HCT116 (cell line): ENCODE measurements at regions of chr1 and their contacts with region 1.

Region 1: DNA sequence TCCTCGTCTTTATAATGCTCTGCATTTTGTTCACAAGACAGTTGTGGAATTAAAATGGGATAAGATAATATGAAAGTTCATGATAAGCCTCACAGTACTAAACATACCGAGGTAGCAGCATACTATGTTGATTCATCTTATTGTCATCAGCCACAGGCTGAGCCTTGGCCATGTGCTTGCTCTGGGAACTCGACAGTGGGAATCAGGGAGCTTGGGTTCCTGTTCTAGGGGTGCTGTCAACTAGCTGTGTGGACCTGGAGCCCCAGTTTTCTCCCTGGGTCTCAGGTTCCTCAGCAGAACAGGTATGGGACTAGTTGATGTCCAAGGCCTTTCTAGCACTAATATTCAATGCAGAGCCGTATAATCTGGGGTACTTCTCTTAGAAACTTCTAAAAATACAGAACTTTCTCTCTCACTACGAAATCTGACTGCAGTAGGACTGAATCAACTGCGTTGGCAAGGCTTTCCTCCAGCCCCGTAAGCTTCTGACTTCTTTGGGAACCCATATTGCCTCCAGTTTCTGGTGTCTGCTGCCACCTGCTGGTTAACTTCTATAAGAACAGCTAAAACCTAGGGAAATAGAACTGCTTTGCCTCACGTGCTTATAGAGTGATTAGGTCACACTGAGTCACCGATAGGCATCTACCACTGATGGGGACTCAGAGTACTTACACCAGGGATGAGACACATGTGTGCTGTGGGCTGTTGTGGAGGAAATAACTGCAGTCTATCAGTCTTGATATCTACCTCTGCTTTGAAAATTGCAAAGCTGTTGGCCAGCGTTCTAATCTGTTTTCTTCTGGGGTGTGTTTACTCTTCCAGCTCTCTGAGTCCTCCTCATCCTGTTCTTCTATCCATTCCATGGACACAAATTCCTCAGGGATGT is 110.9 kb downstream of the RGL1 start:
- DNase-seq: peak; percentile 91
- ATAC-seq: peak; percentile 93
- H3K4me3 ChIP-seq: peak overlapping the region in 1 of 2 experiments; percentile 11; a peak in 1 of 4 replicates
- H3K27ac ChIP-seq: no peak overlapping the region
- H3K4me1 ChIP-seq: peaks cover 2 to 12% of the 10 kb centered on the region in 2 experiments; a peak in 2 of 4 replicates
- H3K27me3 ChIP-seq: no peaks in the 10 kb centered on the region
- CTCF ChIP-seq: peak; percentile 63 to 91 (median 83)
- POLR2A ChIP-seq: no peak
- RAD21 ChIP-seq: peak; percentile 96

Region 2: GRCh38 chr1:182781841-182782586 is 1133.9 kb before region 1 on chr1:
- CTCF ChIA-PET with region 1: no interaction called
- POLR2A ChIA-PET with region 1: no interaction called
- RAD21 ChIA-PET with region 1: no interaction called
- intact Hi-C with region 1: no loop called
- DNase-seq: peak; percentile 48
- ATAC-seq: peak; percentile 81
- H3K4me3 ChIP-seq: no peak overlapping the region
- H3K27ac ChIP-seq: no peak overlapping the region
- H3K4me1 ChIP-seq: no peaks in the 10 kb centered on the region
- H3K27me3 ChIP-seq: no peaks in the 10 kb centered on the region
- CTCF ChIP-seq: peak; percentile 78 to 82 (median 80)
- POLR2A ChIP-seq: no peak
- RAD21 ChIP-seq: peak; percentile 90

Region 3: DNA sequence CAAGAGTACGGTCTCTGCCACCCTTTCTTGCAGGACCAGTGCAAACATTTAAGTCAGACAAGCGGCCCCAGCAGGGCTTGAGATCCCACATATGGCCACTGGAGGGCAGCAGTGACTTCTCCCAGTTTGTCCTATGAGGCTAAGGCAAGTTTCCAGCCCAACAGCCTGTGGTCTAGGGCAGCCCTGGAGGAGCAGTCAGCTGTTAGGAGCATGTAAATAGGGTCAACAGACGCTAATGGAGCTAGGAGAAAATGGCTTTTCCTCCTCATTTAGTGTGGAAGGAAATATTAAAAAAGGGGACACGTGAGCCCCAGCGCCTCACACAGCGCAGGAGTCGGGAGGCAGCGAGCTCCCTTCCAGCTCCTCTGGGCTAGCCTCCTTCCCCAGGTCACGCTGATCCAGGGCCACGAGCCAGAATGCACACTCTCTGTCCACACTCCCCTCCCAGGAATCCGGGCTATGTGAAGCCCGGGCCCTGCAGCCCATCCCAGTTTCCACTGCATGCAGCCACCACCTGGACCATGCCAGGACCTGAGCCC is 634.2 kb before region 1 on chr1:
- CTCF ChIA-PET with region 1: interaction called, 3 read pairs
- POLR2A ChIA-PET with region 1: no interaction called
- RAD21 ChIA-PET with region 1: no interaction called
- intact Hi-C with region 1: loop called (anchors 2 kb)
- DNase-seq: peak; percentile 65
- ATAC-seq: peak; percentile 96
- H3K4me3 ChIP-seq: no peak overlapping the region
- H3K27ac ChIP-seq: no peak overlapping the region
- H3K4me1 ChIP-seq: no peaks in the 10 kb centered on the region
- H3K27me3 ChIP-seq: no peaks in the 10 kb centered on the region
- CTCF ChIP-seq: peak; percentile 87 to 97 (median 90)
- POLR2A ChIP-seq: no peak
- RAD21 ChIP-seq: peak; percentile 88

Region 4: GRCh38 chr1:183609313-183609712 is 306.6 kb before region 1 on chr1:
- CTCF ChIA-PET with region 1: interaction called, 11 read pairs
- POLR2A ChIA-PET with region 1: no interaction called
- RAD21 ChIA-PET with region 1: no interaction called
- intact Hi-C with region 1: no loop called
- DNase-seq: no peak
- ATAC-seq: peak; percentile 94
- H3K4me3 ChIP-seq: no peak overlapping the region
- H3K27ac ChIP-seq: no peak overlapping the region
- H3K4me1 ChIP-seq: peaks cover 0 to 12% of the 10 kb centered on the region in 2 experiments; a peak in 2 of 4 replicates
- H3K27me3 ChIP-seq: no peaks in the 10 kb centered on the region
- CTCF ChIP-seq: peak; percentile 49 to 67 (median 59); a peak in 5 of 6 replicates
- POLR2A ChIP-seq: no peak
- RAD21 ChIP-seq: peak; percentile 63

Region 5: DNA sequence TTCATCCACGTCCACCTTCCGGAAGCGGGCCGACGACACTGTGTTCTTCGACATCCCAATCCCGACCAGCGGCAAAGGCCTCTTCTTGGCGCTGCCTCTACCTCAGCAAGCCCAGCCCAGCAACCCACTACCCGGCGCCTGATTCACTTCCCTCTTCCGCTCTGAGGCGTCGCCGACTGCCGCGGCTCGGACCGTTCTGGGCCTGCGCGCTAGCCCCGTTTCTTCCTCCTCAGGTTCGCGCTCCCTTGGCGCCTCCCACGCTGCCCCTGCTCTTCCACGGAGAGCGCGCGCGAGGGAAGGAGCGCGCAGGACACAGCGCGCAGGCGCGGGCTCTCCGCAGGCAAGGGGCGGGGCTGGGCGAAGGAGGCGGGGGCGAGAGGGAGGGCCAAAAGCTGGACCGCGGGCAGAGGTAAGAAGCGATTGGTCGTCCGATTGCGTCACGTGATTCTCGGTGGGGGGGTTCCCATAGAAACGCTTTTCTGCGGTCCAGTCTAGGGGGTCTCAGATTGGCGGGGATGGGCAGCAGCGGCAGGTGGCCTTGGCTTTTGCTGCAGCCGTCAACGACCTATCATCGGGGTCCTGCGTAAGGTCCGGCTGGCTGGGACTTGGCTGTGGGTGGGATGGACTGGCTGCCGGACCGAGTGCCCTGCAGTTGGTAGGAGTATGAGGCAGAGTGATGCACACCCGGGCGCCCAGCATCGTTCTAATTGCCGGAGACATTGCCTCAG is 280.1 kb before region 1 on chr1 and contains the start of gene ARPC5:
- CTCF ChIA-PET with region 1: no interaction called
- POLR2A ChIA-PET with region 1: no interaction called
- RAD21 ChIA-PET with region 1: no interaction called
- intact Hi-C with region 1: loop called (anchors 5 kb)
- DNase-seq: peak; percentile 92
- ATAC-seq: peak; percentile 94
- H3K4me3 ChIP-seq: peak within 1 kb of the TSS; percentile 79 to 81
- H3K27ac ChIP-seq: peak within 1 kb of the TSS; percentile 85
- H3K4me1 ChIP-seq: peaks cover 6 to 22% of the 10 kb centered on the region in 2 experiments; a peak in 3 of 4 replicates
- H3K27me3 ChIP-seq: no peaks in the 10 kb centered on the region
- CTCF ChIP-seq: no peak
- POLR2A ChIP-seq: peak; percentile 86
- RAD21 ChIP-seq: no peak
- total RNA-seq, gene ARPC5: 71.5 TPM

Region 6: GRCh38 chr1:183655562-183656075 is 260.2 kb before region 1 on chr1:
- CTCF ChIA-PET with region 1: interaction called, 83 read pairs
- POLR2A ChIA-PET with region 1: no interaction called
- RAD21 ChIA-PET with region 1: interaction called, 8 to 9 read pairs
- intact Hi-C with region 1: loop called (anchors 1 kb)
- DNase-seq: peak; percentile 69
- ATAC-seq: peak; percentile 96
- H3K4me3 ChIP-seq: no peak overlapping the region
- H3K27ac ChIP-seq: no peak overlapping the region
- H3K4me1 ChIP-seq: 0 out of 4 replicates have a peak, but pooled peaks cover 0 to 3% of the 10 kb centered on the region in 2 experiments
- H3K27me3 ChIP-seq: no peaks in the 10 kb centered on the region
- CTCF ChIP-seq: peak; percentile 78 to 84 (median 84)
- POLR2A ChIP-seq: no peak
- RAD21 ChIP-seq: peak; percentile 89

Region 7: DNA sequence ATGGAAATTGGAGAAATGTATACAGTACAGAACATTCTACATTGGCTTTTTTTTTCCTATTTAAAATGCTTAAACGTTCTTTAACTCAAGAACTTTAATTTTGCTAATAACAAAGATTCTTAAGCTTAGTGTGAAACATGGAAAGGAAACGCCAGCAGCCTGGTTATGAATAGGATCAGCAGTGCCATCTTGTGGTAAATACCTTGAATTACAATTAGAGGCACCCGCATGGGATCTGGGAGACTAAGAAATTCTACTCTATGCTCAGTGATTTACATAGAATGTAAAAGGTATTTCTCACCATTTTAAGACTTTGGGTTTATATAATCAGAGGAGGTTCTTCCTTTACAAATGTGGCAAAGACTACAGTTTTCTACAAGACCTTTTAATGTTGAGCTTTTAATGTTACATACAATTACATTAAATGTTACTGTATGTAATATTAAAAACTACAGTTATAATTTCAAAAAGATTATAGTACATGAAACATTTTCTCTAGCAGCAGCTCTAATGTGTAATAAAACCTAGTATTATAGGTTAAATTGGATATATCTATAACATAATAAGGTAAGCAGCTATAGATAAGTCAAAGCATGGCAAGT is 230.7 kb before region 1 on chr1:
- CTCF ChIA-PET with region 1: interaction called, 22 read pairs
- POLR2A ChIA-PET with region 1: interaction called, 3 read pairs
- RAD21 ChIA-PET with region 1: interaction called, 3 read pairs
- intact Hi-C with region 1: loop called (anchors 10 kb)
- DNase-seq: peak; percentile 45
- ATAC-seq: peak; percentile 83
- H3K4me3 ChIP-seq: no peak overlapping the region
- H3K27ac ChIP-seq: no peak overlapping the region
- H3K4me1 ChIP-seq: no peaks in the 10 kb centered on the region
- H3K27me3 ChIP-seq: no peaks in the 10 kb centered on the region
- CTCF ChIP-seq: peak; percentile 65 to 83 (median 75)
- POLR2A ChIP-seq: no peak
- RAD21 ChIP-seq: peak; percentile 83

Region 8: GRCh38 chr1:183734543-183735036 is 181.3 kb before region 1 on chr1:
- CTCF ChIA-PET with region 1: no interaction called
- POLR2A ChIA-PET with region 1: no interaction called
- RAD21 ChIA-PET with region 1: no interaction called
- intact Hi-C with region 1: no loop called
- DNase-seq: no peak
- ATAC-seq: no peak
- H3K4me3 ChIP-seq: no peak overlapping the region
- H3K27ac ChIP-seq: no peak overlapping the region
- H3K4me1 ChIP-seq: no peaks in the 10 kb centered on the region
- H3K27me3 ChIP-seq: no peaks in the 10 kb centered on the region
- CTCF ChIP-seq: no peak
- POLR2A ChIP-seq: no peak
- RAD21 ChIP-seq: no peak

Region 9: DNA sequence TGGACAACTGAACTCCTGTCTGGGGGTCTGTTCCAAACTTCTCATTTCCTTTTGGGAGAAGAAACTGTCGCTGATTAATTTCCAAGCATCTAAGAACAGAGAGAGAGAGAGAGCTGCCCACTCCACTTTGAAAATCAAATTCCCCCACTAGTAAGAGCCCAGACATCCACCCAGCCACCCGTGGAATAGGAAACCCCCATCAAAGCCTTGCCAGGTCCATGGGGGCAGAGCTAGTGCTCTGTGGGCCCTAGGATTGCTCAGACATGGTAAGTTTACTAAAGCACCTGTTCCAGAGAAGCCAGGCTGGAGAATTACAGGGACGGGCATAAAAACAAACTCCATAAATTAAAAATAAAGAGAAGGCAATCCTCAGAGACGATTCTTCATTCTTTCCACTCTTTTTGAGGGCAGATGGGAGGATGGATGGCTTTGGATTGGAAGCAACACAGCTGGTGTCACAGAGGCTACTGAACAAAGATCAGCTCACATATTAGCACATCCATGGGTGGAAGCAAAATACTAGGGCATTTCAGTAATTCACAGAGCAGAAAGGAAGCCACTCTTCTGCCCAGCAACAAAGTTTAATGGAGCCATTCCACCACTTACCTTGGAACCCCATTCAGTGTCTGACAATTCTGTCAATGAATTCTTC is 17.8 kb after region 1 on chr1:
- CTCF ChIA-PET with region 1: no interaction called
- POLR2A ChIA-PET with region 1: no interaction called
- RAD21 ChIA-PET with region 1: no interaction called
- intact Hi-C with region 1: no loop called
- DNase-seq: no peak
- ATAC-seq: no peak
- H3K4me3 ChIP-seq: no peak overlapping the region
- H3K27ac ChIP-seq: no peak overlapping the region
- H3K4me1 ChIP-seq: no peaks in the 10 kb centered on the region
- H3K27me3 ChIP-seq: no peaks in the 10 kb centered on the region
- CTCF ChIP-seq: no peak
- POLR2A ChIP-seq: no peak
- RAD21 ChIP-seq: no peak

Region 10: DNA sequence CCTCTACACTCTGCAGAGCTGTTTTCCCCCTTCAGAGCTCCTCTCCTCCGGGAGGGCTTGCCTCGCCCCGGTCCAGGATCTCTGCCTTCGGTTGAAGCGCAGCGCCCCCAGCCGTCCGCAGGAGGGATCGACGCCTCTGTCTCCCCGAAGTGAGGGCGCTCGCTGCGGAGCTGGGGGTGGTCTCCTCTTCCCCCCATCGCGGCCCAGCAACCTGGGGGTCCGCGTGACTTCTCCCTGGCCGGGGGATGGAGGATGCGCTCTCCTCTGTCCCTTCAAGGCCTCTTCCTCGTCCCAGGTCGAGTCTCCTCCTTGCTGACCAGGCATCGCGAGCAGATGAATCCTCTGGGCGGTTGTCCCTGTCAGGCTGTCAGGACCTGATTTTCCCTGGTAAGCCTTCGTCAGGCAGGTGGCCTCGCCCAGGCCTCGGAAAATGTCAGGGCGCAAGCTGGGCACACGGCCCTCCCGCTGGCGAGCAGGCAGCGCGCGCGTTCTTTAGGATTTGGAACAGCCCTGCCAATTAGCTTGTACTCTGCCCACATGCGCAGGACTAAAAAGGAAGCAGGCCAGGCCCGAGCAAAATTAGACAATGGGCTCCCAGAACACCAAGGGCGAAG is 748.3 kb after region 1 on chr1:
- CTCF ChIA-PET with region 1: interaction called, 5 read pairs
- POLR2A ChIA-PET with region 1: no interaction called
- RAD21 ChIA-PET with region 1: interaction called in 1 of 2 experiments, 3 read pairs
- intact Hi-C with region 1: loop called (anchors 10 kb)
- DNase-seq: peak; percentile 26
- ATAC-seq: peak; percentile 98
- H3K4me3 ChIP-seq: peak overlapping the region; percentile 18 to 31
- H3K27ac ChIP-seq: no peak overlapping the region
- H3K4me1 ChIP-seq: peaks cover 0 to 6% of the 10 kb centered on the region in 2 experiments; a peak in 2 of 4 replicates
- H3K27me3 ChIP-seq: no peaks in the 10 kb centered on the region
- CTCF ChIP-seq: peak; percentile 74 to 94 (median 88); a peak in 5 of 6 replicates
- POLR2A ChIP-seq: no peak
- RAD21 ChIP-seq: peak; percentile 89

Region 11: GRCh38 chr1:184684285-184685074 is 768.6 kb after region 1 on chr1:
- CTCF ChIA-PET with region 1: no interaction called
- POLR2A ChIA-PET with region 1: no interaction called
- RAD21 ChIA-PET with region 1: no interaction called
- intact Hi-C with region 1: no loop called
- DNase-seq: no peak
- ATAC-seq: no peak
- H3K4me3 ChIP-seq: no peak overlapping the region
- H3K27ac ChIP-seq: no peak overlapping the region
- H3K4me1 ChIP-seq: no peaks in the 10 kb centered on the region
- H3K27me3 ChIP-seq: no peaks in the 10 kb centered on the region
- CTCF ChIP-seq: no peak
- POLR2A ChIP-seq: no peak
- RAD21 ChIP-seq: no peak